Caki2 (cell line): ENCODE measurements at regions of chr5 and their contacts with region 1.

Region 1: GRCh38 chr5:142145106-142145900 is 36.7 kb downstream of the NDFIP1 start:
- DNase-seq: peak; percentile 52

Region 2: DNA sequence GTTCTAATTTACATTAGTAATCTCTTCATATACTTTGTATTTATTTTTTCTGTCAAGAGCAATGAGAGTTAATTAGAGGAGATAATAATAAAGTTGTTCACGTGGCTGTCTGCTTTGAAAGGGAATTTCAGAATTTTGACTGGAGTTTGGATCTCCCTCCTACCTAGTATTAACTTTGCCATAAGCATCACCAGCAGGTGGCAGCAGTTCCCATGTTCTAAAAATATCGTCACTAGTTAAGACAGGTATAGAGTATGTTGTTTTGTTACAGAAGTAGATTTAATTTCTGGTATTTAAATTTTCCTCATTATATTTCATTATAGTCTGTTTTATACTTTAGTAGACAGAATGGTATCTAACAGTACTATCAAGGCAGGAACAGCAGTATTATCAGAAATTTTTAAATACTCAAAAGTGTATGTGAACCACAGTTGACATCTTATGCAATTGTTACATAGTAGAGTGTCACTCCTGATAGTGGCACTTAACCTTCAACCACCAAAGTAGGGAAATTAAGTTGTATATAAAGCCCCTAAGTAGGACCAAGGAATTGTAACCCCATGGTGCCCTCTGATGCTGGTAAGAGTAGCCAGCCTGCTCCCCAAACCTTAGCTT is 152.8 kb before region 1 on chr5:
- in situ Hi-C with region 1: loop called (anchors 25 kb)
- DNase-seq: peak; percentile 51